ENCODE measurements at regions of chr1 and their contacts with region 1.

Region 1: GRCh38 chr1:165073185-165074007 is 283.1 kb downstream of the LMX1A start:
- DNase-seq: no peak
- H3K4me3 ChIP-seq: no peak overlapping the region
- H3K27ac ChIP-seq: no peak overlapping the region
- H3K4me1 ChIP-seq: no peaks in the 10 kb centered on the region
- H3K27me3 ChIP-seq: no peaks in the 10 kb centered on the region
- CTCF ChIP-seq: peak; percentile 28 to 80 (median 61)
- POLR2A ChIP-seq: no peak

Region 2: DNA sequence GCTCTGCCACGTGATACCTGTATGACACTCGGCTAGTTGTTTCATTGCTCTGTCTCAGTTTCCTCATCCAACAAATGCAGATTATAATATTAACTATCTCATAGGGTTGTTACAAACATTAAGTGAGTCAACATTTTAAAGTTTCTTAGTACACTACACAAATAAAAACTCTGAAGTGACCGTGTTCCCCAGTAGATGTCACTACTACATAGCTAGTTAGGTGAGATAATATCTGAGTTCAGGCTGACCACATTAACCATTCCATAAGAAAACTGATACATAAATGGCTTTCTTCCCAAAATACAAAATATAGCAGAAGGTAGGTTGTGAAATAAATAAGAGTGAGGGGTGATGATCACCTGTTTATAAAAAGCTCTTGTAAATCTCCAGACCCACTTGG is 1537.6 kb before region 1 on chr1:
- intact Hi-C with region 1: loop called (anchors 10 kb)
- DNase-seq: no peak
- H3K4me3 ChIP-seq: no peak overlapping the region
- H3K27ac ChIP-seq: no peak overlapping the region
- H3K4me1 ChIP-seq: no peaks in the 10 kb centered on the region
- H3K27me3 ChIP-seq: no peaks in the 10 kb centered on the region
- CTCF ChIP-seq: peak in 1 of 3 experiments; percentile 27
- POLR2A ChIP-seq: no peak

Region 3: GRCh38 chr1:164558461-164559341 is 514.7 kb before region 1 on chr1 and contains the start of gene PBX1:
- intact Hi-C with region 1: loop called (anchors 5 kb)
- DNase-seq: peak; percentile 98 to 100
- H3K4me3 ChIP-seq: peak within 1 kb of the TSS; percentile 82 to 91
- H3K27ac ChIP-seq: peak within 1 kb of the TSS; percentile 95
- H3K4me1 ChIP-seq: peaks cover 17% of the 10 kb centered on the region
- H3K27me3 ChIP-seq: no peaks in the 10 kb centered on the region
- CTCF ChIP-seq: no peak
- POLR2A ChIP-seq: peak in 1 of 2 donors; percentile 97
- total RNA-seq, gene PBX1: 69.0 TPM

Measured in vagina (tissue), 2 donors.